Activated CD8-positive, alpha-beta T cell treated with anti-CD3 and anti-CD28 coated beads, Interleukin-2, amount 10 ng/mL, durations not matched to agents 7 days and 5 days (primary cell): ENCODE measurements at regions of chrX and their contacts with region 1.

Region 1: DNA sequence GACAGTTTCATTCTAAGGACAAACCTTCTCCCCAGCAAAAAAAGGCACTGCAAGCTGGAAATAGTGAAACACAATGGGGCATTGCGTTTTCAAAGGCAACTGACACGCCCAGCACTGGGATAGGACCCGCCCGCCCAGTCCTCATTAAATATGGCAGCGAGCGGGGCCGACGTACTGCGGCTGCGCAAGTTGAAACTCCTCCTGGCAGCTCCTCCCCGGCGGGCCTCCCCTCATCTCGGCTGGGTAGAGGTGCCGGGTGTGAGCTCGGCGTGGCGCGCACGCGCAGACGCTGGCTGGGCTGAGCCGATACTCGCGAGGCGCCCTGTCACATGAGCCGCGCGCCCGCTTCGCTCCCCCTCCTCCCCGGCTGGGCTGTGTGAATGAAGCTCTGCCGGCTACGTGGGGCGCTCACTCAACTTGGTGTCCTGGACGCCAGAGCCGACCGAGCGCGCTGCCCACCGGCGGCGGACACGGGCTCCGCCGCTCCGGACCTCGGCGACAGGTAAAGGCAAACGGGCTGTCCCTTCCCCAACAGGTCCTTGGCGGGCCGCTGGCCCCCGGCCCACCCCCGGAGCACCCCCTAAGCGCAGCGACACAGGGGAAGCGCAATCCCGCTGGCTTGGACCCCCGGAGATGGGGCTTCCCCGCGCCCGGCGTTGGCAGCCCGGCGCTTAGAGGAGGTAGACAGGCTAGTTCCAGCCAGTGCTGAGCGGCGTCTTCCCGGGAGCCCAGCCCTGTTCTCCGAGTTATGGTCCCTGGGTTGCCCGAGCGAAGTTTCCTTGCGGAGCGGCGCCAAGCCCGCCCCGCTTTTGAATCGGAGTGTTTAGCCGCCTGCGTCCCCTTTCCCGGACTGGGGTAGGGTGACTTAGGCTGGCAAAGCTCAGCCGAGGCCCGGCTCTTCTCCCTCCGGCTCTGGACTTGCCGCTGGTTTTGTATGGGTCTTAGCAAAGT is at the start of gene CLCN5:
- DNase-seq: peak; percentile 95
- ATAC-seq: peak; percentile 99
- H3K4me3 Mint-ChIP-seq: peak within 1 kb of the TSS; percentile 78
- H3K27ac Mint-ChIP-seq: peak within 1 kb of the TSS; percentile 72
- H3K4me1 Mint-ChIP-seq: peaks cover 16% of the 10 kb centered on the region
- H3K27me3 Mint-ChIP-seq: no peaks in the 10 kb centered on the region
- total RNA-seq, gene CLCN5: 4.0 TPM

Region 2: GRCh38 chrX:49809891-49810632 is 112.5 kb before region 1 on chrX:
- CTCF ChIA-PET with region 1: no interaction called
- POLR2A ChIA-PET with region 1: no interaction called
- DNase-seq: no peak
- ATAC-seq: no peak
- H3K4me3 Mint-ChIP-seq: no peak overlapping the region
- H3K27ac Mint-ChIP-seq: no peak overlapping the region
- H3K4me1 Mint-ChIP-seq: no peaks in the 10 kb centered on the region
- H3K27me3 Mint-ChIP-seq: peaks cover 2% of the 10 kb centered on the region

Region 3: DNA sequence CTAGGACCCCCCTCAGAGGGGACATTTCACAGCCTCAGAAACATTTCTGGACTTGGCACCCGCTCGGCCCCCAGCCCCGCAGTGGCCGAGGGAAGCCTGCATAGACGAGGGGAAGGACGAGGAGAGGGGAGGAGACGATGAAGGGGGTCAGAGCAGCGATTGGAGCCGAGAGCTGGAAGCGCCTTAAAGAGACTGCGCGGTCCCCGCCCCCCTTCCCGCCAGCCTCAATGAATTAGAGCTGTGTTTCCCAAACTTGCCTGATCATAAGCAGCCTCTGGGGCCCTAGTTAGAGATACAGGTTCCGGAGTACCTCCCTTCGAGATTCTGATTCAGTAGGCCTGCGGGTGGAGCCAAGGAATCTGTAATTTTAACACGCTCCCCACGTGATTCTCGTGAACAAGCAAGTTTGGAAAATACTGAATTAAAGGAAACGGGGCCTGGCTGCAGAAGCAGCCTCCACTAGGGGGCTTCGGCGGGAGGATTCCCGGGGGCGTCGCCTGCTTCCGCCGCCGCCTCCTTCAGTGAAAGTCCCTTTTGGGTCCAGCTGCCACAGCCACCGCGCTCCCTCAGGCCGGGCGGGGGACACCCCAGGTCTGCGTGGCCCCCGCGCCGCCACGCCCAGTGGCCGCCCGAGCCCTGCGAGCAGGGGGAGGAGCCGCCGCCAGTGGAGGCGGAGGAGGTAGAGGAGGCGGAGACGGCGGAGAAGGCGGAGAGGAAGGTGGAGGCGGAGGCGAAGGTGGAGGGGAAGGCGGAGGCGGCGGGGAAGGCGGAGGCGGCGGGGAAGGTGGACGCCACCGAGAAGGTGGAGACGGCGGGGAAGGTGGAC is 43.5 kb before region 1 on chrX and contains the start of gene USP27X:
- CTCF ChIA-PET with region 1: interaction called, 78 read pairs
- POLR2A ChIA-PET with region 1: interaction called, 3 read pairs
- DNase-seq: peak; percentile 84
- ATAC-seq: peak; percentile 95
- H3K4me3 Mint-ChIP-seq: peak within 1 kb of the TSS; percentile 75
- H3K27ac Mint-ChIP-seq: peak within 1 kb of the TSS; percentile 66
- H3K4me1 Mint-ChIP-seq: peaks cover 12% of the 10 kb centered on the region
- H3K27me3 Mint-ChIP-seq: no peaks in the 10 kb centered on the region
- total RNA-seq, gene USP27X: 1.4 to 1.5 TPM

Region 4: DNA sequence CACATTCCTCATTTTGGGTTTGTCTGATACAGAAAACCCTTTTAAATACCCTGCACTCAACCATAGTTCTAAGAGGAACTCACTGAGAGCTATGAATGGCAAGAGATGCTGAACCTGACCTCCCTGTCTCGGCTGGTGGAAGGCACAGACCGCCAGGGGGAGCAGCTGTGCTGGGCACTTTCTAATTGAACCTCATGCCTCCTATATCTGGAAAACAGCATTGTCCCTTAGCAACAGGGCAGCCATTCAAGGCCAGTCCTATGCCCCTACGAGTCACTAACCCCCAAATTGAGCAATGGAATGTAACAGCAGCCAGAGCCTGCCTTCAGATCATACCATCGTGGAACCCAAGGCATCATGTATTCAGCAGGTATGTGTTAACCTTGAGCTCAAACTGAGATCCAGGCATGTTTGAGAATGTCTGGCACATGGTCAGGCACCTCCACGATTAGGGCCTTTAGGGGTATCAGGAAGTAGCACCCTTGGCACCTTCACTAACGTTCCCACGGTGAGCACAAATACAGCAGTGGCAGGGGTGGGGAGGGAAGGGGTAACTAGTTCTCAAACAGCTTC is 38.2 kb before region 1 on chrX:
- CTCF ChIA-PET with region 1: interaction called, 78 read pairs
- POLR2A ChIA-PET with region 1: interaction called, 3 read pairs
- DNase-seq: peak; percentile 68
- ATAC-seq: no peak
- H3K4me3 Mint-ChIP-seq: no peak overlapping the region
- H3K27ac Mint-ChIP-seq: no peak overlapping the region
- H3K4me1 Mint-ChIP-seq: peaks cover 6% of the 10 kb centered on the region
- H3K27me3 Mint-ChIP-seq: peaks cover 5% of the 10 kb centered on the region